Posterior cingulate gyrus (tissue), 11 donors: ENCODE measurements at regions of chr14 and their contacts with region 1.

Region 1: DNA sequence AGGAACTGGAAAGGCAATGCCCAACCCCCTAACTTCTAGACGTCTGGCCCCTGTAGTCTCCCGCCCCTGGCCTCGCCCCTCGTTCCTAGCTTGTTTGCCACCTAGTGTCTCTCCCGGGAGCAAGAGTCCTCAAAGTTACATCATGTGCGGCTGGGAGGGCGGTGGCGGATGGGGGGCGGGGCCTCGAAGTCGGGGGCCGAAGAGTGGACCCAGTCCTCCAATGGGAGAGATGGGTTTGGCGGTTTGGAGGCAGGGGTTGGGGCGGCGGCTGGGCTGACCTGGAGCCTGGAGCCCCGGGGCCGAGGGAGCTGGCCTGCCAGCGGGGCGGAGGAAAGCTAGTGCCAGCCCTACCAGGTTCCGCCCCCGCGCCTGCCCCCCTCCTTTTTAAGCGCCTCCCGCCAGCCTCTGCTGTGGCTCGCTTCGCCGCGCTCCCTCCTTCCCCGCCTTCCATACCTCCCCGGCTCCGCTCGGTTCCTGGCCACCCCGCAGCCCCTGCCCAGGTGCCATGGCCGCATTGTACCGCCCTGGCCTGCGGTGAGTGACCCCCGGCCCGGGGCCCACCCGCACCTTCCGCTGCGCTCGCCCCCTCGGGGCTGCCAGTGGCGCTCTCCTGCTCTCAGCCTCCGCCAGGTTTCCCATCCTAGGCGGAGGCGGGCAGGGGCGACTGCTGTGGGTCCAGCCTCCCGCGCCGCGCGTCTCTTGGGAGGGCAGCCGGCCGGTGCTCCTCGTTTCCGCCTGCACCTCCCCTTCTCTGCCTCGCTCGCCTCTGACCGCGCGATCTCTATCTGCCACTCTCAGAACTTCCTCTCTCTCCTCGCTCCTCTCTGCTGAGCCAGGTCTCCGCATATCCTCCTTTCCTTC is at the start of gene PCK2:
- DNase-seq: peak; percentile 57 to 97 (median 74)

Region 2: DNA sequence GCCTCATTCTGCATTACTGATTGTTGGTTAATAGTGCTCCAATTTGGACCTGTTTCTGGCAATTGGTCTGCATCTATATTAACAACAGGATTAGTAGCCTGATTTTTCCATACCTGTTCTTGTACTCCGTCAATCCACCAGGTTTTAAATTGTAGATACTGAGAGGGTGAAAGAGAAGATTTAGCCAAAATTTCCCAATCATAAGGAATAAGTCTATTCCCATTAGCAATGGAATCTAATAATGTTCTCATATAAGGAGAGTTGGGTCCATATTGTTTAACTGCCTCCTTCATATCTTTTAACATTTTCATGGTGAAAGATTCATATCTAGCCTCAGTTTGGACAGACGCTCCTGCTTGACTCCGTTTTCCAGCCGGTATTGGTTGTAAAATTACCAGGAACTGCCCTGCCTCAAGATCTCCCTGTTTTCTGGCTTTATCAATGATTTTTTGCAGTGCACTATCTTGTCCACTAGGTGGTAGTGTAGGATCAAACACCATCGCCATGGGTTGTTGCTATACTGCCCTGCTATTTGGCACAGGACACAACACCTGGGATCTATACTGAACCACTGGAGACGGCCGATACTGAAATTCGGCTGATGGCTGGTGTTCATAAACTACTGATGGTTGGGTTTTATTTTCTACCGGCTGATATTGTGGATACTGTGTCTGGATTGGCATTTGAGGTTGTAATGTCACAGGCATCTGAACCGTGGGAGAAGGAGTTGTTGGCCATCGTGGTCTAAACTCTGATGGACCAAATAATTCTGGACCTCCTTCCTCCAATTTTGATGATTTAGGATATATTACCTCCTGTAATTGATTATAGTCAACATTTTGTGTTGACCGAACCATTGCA is 80.2 kb before region 1 on chr14:
- intact Hi-C with region 1: loop called (anchors 1 kb)
- DNase-seq: peak in 1 of 10 donors; percentile 82

Region 3: DNA sequence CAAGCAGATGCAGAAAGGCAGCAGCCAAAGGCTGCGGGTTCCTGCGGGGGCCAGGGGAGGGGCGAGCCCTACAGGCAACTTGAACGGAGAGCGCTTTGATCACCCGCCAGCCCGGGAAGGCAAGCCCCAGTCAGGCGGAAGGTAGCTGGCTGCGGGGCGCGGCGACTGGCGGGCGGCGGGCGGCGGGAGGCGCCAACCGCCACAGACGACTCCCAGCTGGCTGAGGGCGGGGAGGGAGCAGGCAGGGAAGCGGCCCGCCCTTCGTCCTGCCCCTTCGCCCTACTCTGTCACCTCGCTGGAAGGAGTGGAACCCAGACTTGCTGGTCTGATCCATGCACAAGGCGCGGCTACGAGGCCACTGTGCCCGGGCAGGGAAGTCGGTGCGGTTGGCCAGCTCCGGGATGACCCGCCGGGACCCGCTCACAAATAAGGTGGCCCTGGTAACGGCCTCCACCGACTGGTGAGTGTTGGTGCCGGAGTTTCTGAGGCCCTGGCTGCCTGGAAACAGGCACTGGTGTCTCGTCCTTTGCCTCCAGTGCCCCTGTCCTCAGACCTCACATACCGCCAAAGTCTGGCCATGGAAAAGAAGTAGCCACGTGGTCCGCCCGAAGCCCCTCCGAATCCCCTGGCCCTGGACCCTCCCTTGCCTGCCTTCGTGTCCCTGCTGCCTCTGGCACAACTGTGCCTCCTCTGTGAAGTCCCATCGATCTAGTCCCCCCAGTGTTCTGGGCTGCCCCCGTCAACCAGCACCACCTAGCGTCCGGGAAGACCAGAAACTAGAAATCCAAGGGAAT is 57.8 kb before region 1 on chr14:
- intact Hi-C with region 1: no loop called
- DNase-seq: peak; percentile 59 to 97 (median 78)

Region 4: GRCh38 chr14:24051789-24052655 is 42.1 kb before region 1 on chr14 and contains the start of gene CARMIL3:
- intact Hi-C with region 1: loop called (anchors 5 kb)
- DNase-seq: peak; percentile 52 to 97 (median 72)